Naive thymus-derived CD4-positive, alpha-beta T cell (primary cell): ENCODE measurements at regions of chr2 and their contacts with region 1.

Region 1: GRCh38 chr2:12176623-12177454 is 430.4 kb downstream of the LPIN1 start:
- DNase-seq: peak in 1 of 9 donors; percentile 13
- ATAC-seq: peak; percentile 83
- H3K4me3 ChIP-seq: peak overlapping the region; percentile 21
- H3K4me3 Mint-ChIP-seq: peak overlapping the region in 9 of 10 donors; percentile 25 to 76 (median 62)
- H3K27ac ChIP-seq: no peak overlapping the region
- H3K27ac Mint-ChIP-seq: peak overlapping the region in 8 of 9 donors; percentile 8 to 95 (median 58)
- H3K4me1 ChIP-seq: peaks cover 10 to 25% of the 10 kb centered on the region in 2 donors
- H3K4me1 Mint-ChIP-seq: peaks cover 33 to 67% (median 52%) of the 10 kb centered on the region in 7 donors
- H3K27me3 ChIP-seq: no peaks in the 10 kb centered on the region
- H3K27me3 Mint-ChIP-seq: peaks cover 0 to 7% (median 0%) of the 10 kb centered on the region in 5 donors

Region 2: DNA sequence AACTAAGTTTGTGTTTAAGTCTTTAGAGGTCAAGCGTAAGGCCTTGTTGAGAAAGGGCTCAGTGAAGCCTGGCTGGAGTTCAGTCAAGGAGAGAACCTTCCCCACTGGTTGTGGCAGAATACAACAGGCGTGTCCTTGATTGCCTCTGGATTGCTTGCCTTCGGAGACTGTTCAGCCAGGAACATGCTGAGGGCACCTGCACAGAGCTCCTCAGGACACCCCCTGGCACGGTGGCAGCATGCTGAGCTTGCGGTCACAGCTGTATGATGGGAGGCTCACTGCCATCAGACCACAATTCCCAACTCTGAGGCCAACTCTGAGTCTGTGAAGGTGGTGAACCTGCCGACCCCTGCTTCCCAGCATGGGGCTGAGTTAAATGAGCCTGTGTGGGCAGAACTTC is 300.4 kb before region 1 on chr2:
- CTCF ChIA-PET with region 1: no interaction called
- POLR2A ChIA-PET with region 1: no interaction called
- intact Hi-C with region 1: no loop called
- DNase-seq: no peak
- ATAC-seq: no peak
- H3K4me3 ChIP-seq: no peak overlapping the region
- H3K4me3 Mint-ChIP-seq: no peak overlapping the region
- H3K27ac ChIP-seq: no peak overlapping the region
- H3K27ac Mint-ChIP-seq: no peak overlapping the region
- H3K4me1 ChIP-seq: no peaks in the 10 kb centered on the region
- H3K4me1 Mint-ChIP-seq: peaks cover 2 to 20% (median 13%) of the 10 kb centered on the region in 7 donors
- H3K27me3 ChIP-seq: no peaks in the 10 kb centered on the region
- H3K27me3 Mint-ChIP-seq: peaks cover 0 to 14% (median 0%) of the 10 kb centered on the region in 5 donors

Region 3: GRCh38 chr2:12044857-12045256 is 132.0 kb before region 1 on chr2:
- CTCF ChIA-PET with region 1: no interaction called
- POLR2A ChIA-PET with region 1: interaction called, 3 read pairs
- intact Hi-C with region 1: loop called in 1 of 2 experiments (anchors 5 kb)
- DNase-seq: peak in 6 of 9 donors; percentile 69 to 88 (median 80)
- ATAC-seq: peak; percentile 93
- H3K4me3 ChIP-seq: peak overlapping the region; percentile 2
- H3K4me3 Mint-ChIP-seq: peak overlapping the region; percentile 31 to 78 (median 62)
- H3K27ac ChIP-seq: peak overlapping the region; percentile 9
- H3K27ac Mint-ChIP-seq: peak overlapping the region; percentile 21 to 88 (median 78)
- H3K4me1 ChIP-seq: peaks cover 16 to 42% of the 10 kb centered on the region in 2 donors
- H3K4me1 Mint-ChIP-seq: peaks cover 16 to 80% (median 65%) of the 10 kb centered on the region in 7 donors
- H3K27me3 ChIP-seq: no peaks in the 10 kb centered on the region
- H3K27me3 Mint-ChIP-seq: peaks cover 0 to 19% (median 0%) of the 10 kb centered on the region in 5 donors